Adrenal gland (tissue), 19 donors: ENCODE measurements at regions of chrX and their contacts with region 1.

Region 1: GRCh38 chrX:133670383-133670782 is 255.1 kb upstream of the GPC4 start:
- DNase-seq: peak in 3 of 7 donors; percentile 20 to 29 (median 24)
- H3K4me3 ChIP-seq: no peak overlapping the region
- H3K27ac ChIP-seq: no peak overlapping the region
- H3K4me1 ChIP-seq: no peaks in the 10 kb centered on the region
- H3K27me3 ChIP-seq: peaks cover 15% of the 10 kb centered on the region
- CTCF ChIP-seq: peak; percentile 53 to 77 (median 72)
- POLR2A ChIP-seq: no peak

Region 2: GRCh38 chrX:132968296-132968949 is 702.0 kb before region 1 on chrX:
- intact Hi-C with region 1: loop called in 1 of 2 experiments (anchors 10 kb)
- DNase-seq: no peak
- H3K4me3 ChIP-seq: no peak overlapping the region
- H3K27ac ChIP-seq: no peak overlapping the region
- H3K4me1 ChIP-seq: no peaks in the 10 kb centered on the region
- H3K27me3 ChIP-seq: peaks cover 3% of the 10 kb centered on the region
- CTCF ChIP-seq: no peak
- POLR2A ChIP-seq: no peak

Region 3: DNA sequence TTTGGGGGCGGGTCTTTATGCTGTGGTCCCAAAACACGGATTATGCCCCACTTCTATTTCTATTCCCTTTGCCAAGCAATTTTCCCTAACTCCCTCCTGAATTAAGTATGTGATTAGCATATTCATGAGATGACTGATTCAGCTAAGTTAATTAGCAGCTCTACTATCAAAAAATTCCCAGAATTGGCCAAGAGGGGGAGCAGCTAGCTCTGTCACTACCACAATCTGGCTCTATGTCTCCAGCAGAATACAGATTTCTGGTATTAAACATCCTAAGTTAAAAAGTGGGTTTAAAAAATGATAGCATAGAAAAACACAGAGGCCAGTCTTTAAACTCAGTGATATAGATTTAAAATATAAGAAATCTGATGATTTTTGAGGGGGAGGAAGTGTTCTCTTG is 335.4 kb before region 1 on chrX:
- intact Hi-C with region 1: loop called in 1 of 2 experiments (anchors 10 kb)
- DNase-seq: peak in 5 of 7 donors; percentile 14 to 49 (median 19)
- H3K4me3 ChIP-seq: no peak overlapping the region
- H3K27ac ChIP-seq: no peak overlapping the region
- H3K4me1 ChIP-seq: no peaks in the 10 kb centered on the region
- H3K27me3 ChIP-seq: peaks cover 12% of the 10 kb centered on the region
- CTCF ChIP-seq: peak; percentile 43 to 58 (median 52)
- POLR2A ChIP-seq: no peak

Region 4: DNA sequence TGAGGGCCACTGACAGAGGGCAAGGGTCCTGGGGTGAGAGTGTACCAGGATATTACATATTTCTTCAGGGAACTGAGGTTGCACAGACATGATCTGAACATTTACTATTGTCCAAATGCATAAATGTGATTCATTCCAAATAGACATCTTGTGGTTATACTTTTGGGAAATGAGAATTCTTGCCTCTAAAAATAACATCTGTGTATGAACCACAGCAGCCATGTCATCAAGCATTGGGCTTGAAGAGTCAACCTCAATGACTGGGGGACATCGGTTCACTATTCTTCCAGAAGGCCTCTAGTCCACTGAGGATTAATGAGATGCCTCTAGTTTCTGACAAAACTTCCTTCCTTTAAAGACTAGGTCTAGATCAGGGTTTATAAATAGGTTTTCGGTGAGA is 62.0 kb before region 1 on chrX:
- intact Hi-C with region 1: no loop called
- DNase-seq: no peak
- H3K4me3 ChIP-seq: no peak overlapping the region
- H3K27ac ChIP-seq: no peak overlapping the region
- H3K4me1 ChIP-seq: no peaks in the 10 kb centered on the region
- H3K27me3 ChIP-seq: no peaks in the 10 kb centered on the region
- CTCF ChIP-seq: no peak
- POLR2A ChIP-seq: no peak

Region 5: DNA sequence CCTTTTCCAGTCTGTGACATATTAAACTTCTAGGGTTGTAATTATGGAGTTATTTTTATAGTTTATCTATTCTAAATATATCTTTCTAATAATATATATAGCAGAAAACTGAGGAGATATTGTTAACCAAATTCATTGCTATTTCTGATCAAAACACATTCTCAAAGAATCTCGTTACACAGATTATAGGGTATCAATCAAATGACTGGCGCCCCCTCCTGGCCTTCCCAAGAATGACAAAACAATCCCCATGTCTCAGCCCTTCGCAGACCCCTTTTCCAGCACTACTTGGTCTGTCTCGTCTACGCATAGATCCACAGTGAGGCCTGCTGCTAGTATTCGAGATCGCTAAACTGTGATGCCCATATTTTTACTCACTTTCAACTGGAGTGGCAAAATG is 105.7 kb after region 1 on chrX:
- intact Hi-C with region 1: no loop called
- DNase-seq: peak in 3 of 7 donors; percentile 1 to 26 (median 14)
- H3K4me3 ChIP-seq: no peak overlapping the region
- H3K27ac ChIP-seq: no peak overlapping the region
- H3K4me1 ChIP-seq: no peaks in the 10 kb centered on the region
- H3K27me3 ChIP-seq: no peaks in the 10 kb centered on the region
- CTCF ChIP-seq: peak in 3 of 6 experiments; percentile 6 to 36 (median 17)
- POLR2A ChIP-seq: no peak